Panc1 (cell line): ENCODE measurements at regions of chr19 and their contacts with region 1.

Region 1: GRCh38 chr19:9785367-9786331 is 17.1 kb upstream of the ZNF846 start:
- DNase-seq: peak; percentile 51
- ATAC-seq: peak; percentile 87
- H3K4me3 ChIP-seq: peak overlapping the region; percentile 61 to 66
- H3K27ac ChIP-seq: peak overlapping the region; percentile 82
- H3K4me1 ChIP-seq: peaks cover 7% of the 10 kb centered on the region; the same call in 1 of the 2 replicates
- H3K27me3 ChIP-seq: no peaks in the 10 kb centered on the region
- CTCF ChIP-seq: no peak

Region 2: DNA sequence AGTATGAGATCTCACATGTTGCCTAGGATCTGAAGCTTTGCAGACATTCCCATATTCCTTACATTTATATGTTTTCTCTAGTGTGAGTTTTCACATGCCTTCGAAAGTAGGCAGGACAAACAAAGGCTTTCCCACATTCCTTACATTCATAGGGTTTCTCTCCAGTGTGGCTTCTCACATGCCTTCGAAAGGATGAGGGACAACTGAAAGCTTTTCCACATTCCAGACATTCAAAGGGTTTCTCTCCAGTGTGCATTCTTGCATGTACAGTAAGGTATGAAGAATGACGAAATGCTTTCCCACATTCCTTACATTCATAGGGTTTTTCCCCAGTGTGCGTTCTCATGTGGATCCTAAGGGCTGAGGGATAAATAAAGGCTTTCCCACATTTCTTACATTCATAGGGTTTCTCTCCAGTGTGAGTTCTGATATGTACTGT is 490.2 kb before region 1 on chr19:
- CTCF ChIA-PET with region 1: no interaction called
- POLR2A ChIA-PET with region 1: interaction called, 16 read pairs
- in situ Hi-C with region 1: no loop called
- intact Hi-C with region 1: no loop called
- DNase-seq: no peak
- ATAC-seq: no peak
- H3K4me3 ChIP-seq: no peak overlapping the region
- H3K27ac ChIP-seq: no peak overlapping the region
- H3K4me1 ChIP-seq: no peaks in the 10 kb centered on the region
- H3K27me3 ChIP-seq: no peaks in the 10 kb centered on the region
- CTCF ChIP-seq: no peak

Region 3: GRCh38 chr19:9445037-9445436 is 340.6 kb before region 1 on chr19:
- CTCF ChIA-PET with region 1: interaction called, 12 read pairs
- POLR2A ChIA-PET with region 1: no interaction called
- in situ Hi-C with region 1: no loop called
- intact Hi-C with region 1: no loop called
- DNase-seq: no peak
- ATAC-seq: no peak
- H3K4me3 ChIP-seq: no peak overlapping the region
- H3K27ac ChIP-seq: no peak overlapping the region
- H3K4me1 ChIP-seq: no peaks in the 10 kb centered on the region
- H3K27me3 ChIP-seq: no peaks in the 10 kb centered on the region
- CTCF ChIP-seq: no peak

Region 4: GRCh38 chr19:9621156-9622037 is 164.3 kb before region 1 on chr19 and contains the start of gene ZNF561:
- CTCF ChIA-PET with region 1: interaction called, 5 read pairs
- POLR2A ChIA-PET with region 1: interaction called, 7 read pairs
- in situ Hi-C with region 1: no loop called
- intact Hi-C with region 1: loop called (anchors 1 kb)
- DNase-seq: no peak
- ATAC-seq: peak; percentile 95
- H3K4me3 ChIP-seq: peak within 1 kb of the TSS; percentile 87 to 88
- H3K27ac ChIP-seq: peak within 1 kb of the TSS; percentile 97
- H3K4me1 ChIP-seq: no peaks in the 10 kb centered on the region
- H3K27me3 ChIP-seq: no peaks in the 10 kb centered on the region
- CTCF ChIP-seq: no peak
- total RNA-seq, gene ZNF561: 15.9 TPM

Region 5: DNA sequence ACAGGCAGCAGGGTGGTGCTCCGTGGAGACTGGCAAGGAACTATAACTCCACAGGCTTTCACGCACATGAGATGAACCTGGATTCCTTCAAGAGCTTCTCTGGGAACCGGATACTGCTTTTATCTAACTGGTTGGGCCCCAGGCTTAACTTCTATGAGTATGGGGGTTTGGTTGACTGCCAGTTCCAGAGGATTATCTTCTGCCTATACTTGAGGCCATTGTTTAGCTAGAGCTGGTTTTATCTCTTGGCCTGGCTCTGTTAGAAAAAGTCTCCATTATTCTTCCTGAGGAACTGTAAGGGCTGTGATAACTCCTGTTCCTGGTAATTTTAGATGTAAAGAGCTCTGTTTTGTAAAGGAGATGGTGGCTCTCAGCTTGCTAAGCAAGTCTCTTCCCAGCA is 58.0 kb before region 1 on chr19:
- CTCF ChIA-PET with region 1: no interaction called
- POLR2A ChIA-PET with region 1: no interaction called
- in situ Hi-C with region 1: no loop called
- intact Hi-C with region 1: no loop called
- DNase-seq: no peak
- ATAC-seq: no peak
- H3K4me3 ChIP-seq: no peak overlapping the region
- H3K27ac ChIP-seq: no peak overlapping the region
- H3K4me1 ChIP-seq: no peaks in the 10 kb centered on the region
- H3K27me3 ChIP-seq: no peaks in the 10 kb centered on the region
- CTCF ChIP-seq: no peak

Region 6: DNA sequence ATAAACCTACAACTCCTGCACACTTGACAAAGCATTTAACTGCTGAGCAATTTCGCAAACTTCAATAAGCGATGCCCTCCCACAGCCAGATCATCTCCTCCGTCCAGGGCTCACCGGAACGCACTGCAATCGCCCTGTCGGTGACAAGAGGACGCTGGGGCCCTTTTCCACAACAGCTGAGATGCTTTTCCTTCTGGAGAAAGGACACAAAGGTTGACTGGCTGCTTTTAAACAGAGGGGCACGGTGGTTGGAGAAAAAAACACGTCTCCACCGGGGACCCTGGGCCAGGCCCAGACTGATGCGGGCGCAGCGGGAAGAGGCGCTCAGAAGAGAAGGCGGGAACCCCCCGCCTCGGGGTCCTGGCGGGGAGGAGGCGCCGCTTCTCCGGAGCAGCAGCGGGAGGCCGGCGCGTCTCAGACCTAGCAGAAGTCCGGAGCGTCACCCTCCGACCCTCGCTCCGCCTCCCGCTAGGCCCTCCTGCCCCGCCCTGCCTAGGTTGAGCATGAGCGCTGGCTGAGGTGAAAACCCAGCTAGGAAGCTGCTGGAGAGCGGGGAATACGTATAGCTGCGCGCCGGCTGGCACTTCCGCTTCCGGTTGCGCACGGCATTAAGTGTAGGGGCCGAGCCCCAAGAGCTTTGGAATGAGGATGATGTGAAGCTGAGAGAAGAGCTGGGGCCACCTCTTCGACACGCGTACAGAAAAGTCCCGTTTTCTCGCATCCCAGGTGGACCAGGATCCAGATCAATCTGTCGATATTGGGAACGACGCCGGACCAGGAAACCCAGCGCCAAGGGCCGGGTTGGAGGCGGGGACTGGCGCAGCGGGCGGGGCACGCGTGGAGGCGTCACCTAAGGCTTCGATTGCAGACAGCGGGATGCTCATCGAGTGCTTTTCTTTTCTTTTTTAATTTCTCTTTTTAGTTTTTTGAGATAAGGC is 17.2 kb before region 1 on chr19 and contains the start of gene ZNF846:
- CTCF ChIA-PET with region 1: interaction called, 12 read pairs
- POLR2A ChIA-PET with region 1: interaction called, 7 read pairs
- in situ Hi-C with region 1: no loop called
- intact Hi-C with region 1: no loop called
- DNase-seq: peak; percentile 79
- ATAC-seq: peak; percentile 100
- H3K4me3 ChIP-seq: peak within 1 kb of the TSS; percentile 80 to 89
- H3K27ac ChIP-seq: peak within 1 kb of the TSS; percentile 93
- H3K4me1 ChIP-seq: no peaks in the 10 kb centered on the region; the same call in 1 of the 2 replicates
- H3K27me3 ChIP-seq: no peaks in the 10 kb centered on the region
- CTCF ChIP-seq: no peak
- total RNA-seq, gene ZNF846: 10.2 TPM